BJ (cell line): ENCODE measurements at regions of chr4 and their contacts with region 1.

Region 1: GRCh38 chr4:47836641-47837093 is 1.2 kb downstream of the CORIN start:
- DNase-seq: no peak
- H3K4me3 ChIP-seq: peak overlapping the region; percentile 58
- H3K27me3 ChIP-seq: no peaks in the 10 kb centered on the region
- CTCF ChIP-seq: peak; percentile 86

Region 2: GRCh38 chr4:46684041-46684440 is 1152.6 kb before region 1 on chr4:
- CTCF ChIA-PET with region 1: no interaction called
- POLR2A ChIA-PET with region 1: no interaction called
- DNase-seq: no peak
- H3K4me3 ChIP-seq: no peak overlapping the region
- H3K27me3 ChIP-seq: no peaks in the 10 kb centered on the region
- CTCF ChIP-seq: no peak

Region 3: GRCh38 chr4:47668810-47669408 is 167.8 kb before region 1 on chr4:
- CTCF ChIA-PET with region 1: interaction called, 11 read pairs
- POLR2A ChIA-PET with region 1: no interaction called
- DNase-seq: no peak
- H3K4me3 ChIP-seq: no peak overlapping the region
- H3K27me3 ChIP-seq: no peaks in the 10 kb centered on the region
- CTCF ChIP-seq: peak; percentile 72

Region 4: GRCh38 chr4:47686294-47686872 is 150.3 kb before region 1 on chr4:
- CTCF ChIA-PET with region 1: interaction called, 19 read pairs
- POLR2A ChIA-PET with region 1: no interaction called
- DNase-seq: no peak
- H3K4me3 ChIP-seq: no peak overlapping the region
- H3K27me3 ChIP-seq: peaks cover 1% of the 10 kb centered on the region
- CTCF ChIP-seq: peak; percentile 72

Region 5: GRCh38 chr4:47704693-47705325 is 131.9 kb before region 1 on chr4:
- CTCF ChIA-PET with region 1: interaction called, 32 read pairs
- POLR2A ChIA-PET with region 1: no interaction called
- DNase-seq: no peak
- H3K4me3 ChIP-seq: no peak overlapping the region
- H3K27me3 ChIP-seq: no peaks in the 10 kb centered on the region
- CTCF ChIP-seq: peak; percentile 57

Region 6: GRCh38 chr4:47852136-47852535 is 15.5 kb after region 1 on chr4:
- CTCF ChIA-PET with region 1: interaction called, 21 read pairs
- POLR2A ChIA-PET with region 1: no interaction called
- DNase-seq: no peak
- H3K4me3 ChIP-seq: no peak overlapping the region
- H3K27me3 ChIP-seq: no peaks in the 10 kb centered on the region
- CTCF ChIP-seq: no peak

Region 7: GRCh38 chr4:47882228-47882627 is 45.6 kb after region 1 on chr4:
- CTCF ChIA-PET with region 1: interaction called, 10 read pairs
- POLR2A ChIA-PET with region 1: no interaction called
- DNase-seq: no peak
- H3K4me3 ChIP-seq: no peak overlapping the region
- H3K27me3 ChIP-seq: no peaks in the 10 kb centered on the region
- CTCF ChIP-seq: no peak

Region 8: GRCh38 chr4:47933840-47934239 is 97.2 kb after region 1 on chr4:
- CTCF ChIA-PET with region 1: interaction called, 10 read pairs
- POLR2A ChIA-PET with region 1: no interaction called
- DNase-seq: no peak
- H3K4me3 ChIP-seq: no peak overlapping the region
- H3K27me3 ChIP-seq: no peaks in the 10 kb centered on the region
- CTCF ChIP-seq: peak; percentile 59